Natural killer cell (primary cell): ENCODE measurements at regions of chr9 and their contacts with region 1.

Region 1: DNA sequence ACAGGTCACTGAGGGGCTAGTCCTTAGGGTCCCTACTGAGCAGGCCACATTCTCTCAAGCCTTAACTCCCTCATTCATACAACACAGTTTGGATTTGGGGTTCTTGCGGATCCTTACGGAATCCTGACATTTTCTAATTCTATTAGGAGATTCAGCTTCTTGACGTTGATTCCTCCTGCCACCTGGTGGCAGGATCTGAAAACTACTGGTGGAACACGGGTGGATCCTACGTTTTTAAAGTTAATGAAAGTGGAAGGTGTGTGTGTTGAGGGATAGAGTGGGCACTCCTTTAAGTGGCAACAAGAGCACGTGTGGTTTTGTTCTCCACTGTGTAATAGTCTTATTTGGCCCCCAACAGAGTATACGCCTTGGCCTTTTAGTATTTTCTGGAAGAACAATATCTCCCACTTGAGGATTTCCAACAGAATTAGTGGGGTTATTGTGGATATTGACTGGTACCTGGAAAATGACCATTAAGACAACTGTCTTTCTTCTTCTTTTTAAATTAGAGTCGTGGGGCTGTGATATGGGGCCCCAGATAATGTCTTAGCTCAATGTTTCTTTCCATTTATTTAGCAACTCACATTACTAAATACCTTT is 25.2 kb downstream of the SLC28A3 start:
- DNase-seq: peak; percentile 30 to 75
- ATAC-seq: peak; percentile 57 to 76 (median 75)
- H3K4me3 ChIP-seq: no peak overlapping the region
- H3K4me3 Mint-ChIP-seq: no peak overlapping the region
- H3K27ac ChIP-seq: no peak overlapping the region
- H3K27ac Mint-ChIP-seq: peak overlapping the region in 1 of 2 donors; percentile 49
- H3K4me1 ChIP-seq: peaks cover 14% of the 10 kb centered on the region
- H3K4me1 Mint-ChIP-seq: peaks cover 6 to 27% of the 10 kb centered on the region in 2 donors
- H3K27me3 ChIP-seq: no peaks in the 10 kb centered on the region
- H3K27me3 Mint-ChIP-seq: no peaks in the 10 kb centered on the region
- CTCF ChIP-seq: peak; percentile 87

Region 2: GRCh38 chr9:84238652-84239051 is 76.7 kb before region 1 on chr9:
- intact Hi-C with region 1: loop called (anchors 10 kb)
- DNase-seq: no peak
- ATAC-seq: no peak
- H3K4me3 ChIP-seq: no peak overlapping the region
- H3K4me3 Mint-ChIP-seq: no peak overlapping the region
- H3K27ac ChIP-seq: no peak overlapping the region
- H3K27ac Mint-ChIP-seq: no peak overlapping the region
- H3K4me1 ChIP-seq: no peaks in the 10 kb centered on the region
- H3K4me1 Mint-ChIP-seq: no peaks in the 10 kb centered on the region
- H3K27me3 ChIP-seq: no peaks in the 10 kb centered on the region
- H3K27me3 Mint-ChIP-seq: peaks cover 9 to 22% of the 10 kb centered on the region in 2 donors
- CTCF ChIP-seq: no peak

Region 3: GRCh38 chr9:84261082-84261746 is 54.2 kb before region 1 on chr9:
- intact Hi-C with region 1: loop called (anchors 5 kb)
- DNase-seq: peak; percentile 31 to 70
- ATAC-seq: peak; percentile 63 to 78 (median 68)
- H3K4me3 ChIP-seq: no peak overlapping the region
- H3K4me3 Mint-ChIP-seq: no peak overlapping the region
- H3K27ac ChIP-seq: no peak overlapping the region
- H3K27ac Mint-ChIP-seq: no peak overlapping the region
- H3K4me1 ChIP-seq: peaks cover 3% of the 10 kb centered on the region
- H3K4me1 Mint-ChIP-seq: peaks cover 8 to 9% of the 10 kb centered on the region in 2 donors
- H3K27me3 ChIP-seq: no peaks in the 10 kb centered on the region
- H3K27me3 Mint-ChIP-seq: peaks cover 10 to 24% of the 10 kb centered on the region in 2 donors
- CTCF ChIP-seq: peak; percentile 75

Region 4: DNA sequence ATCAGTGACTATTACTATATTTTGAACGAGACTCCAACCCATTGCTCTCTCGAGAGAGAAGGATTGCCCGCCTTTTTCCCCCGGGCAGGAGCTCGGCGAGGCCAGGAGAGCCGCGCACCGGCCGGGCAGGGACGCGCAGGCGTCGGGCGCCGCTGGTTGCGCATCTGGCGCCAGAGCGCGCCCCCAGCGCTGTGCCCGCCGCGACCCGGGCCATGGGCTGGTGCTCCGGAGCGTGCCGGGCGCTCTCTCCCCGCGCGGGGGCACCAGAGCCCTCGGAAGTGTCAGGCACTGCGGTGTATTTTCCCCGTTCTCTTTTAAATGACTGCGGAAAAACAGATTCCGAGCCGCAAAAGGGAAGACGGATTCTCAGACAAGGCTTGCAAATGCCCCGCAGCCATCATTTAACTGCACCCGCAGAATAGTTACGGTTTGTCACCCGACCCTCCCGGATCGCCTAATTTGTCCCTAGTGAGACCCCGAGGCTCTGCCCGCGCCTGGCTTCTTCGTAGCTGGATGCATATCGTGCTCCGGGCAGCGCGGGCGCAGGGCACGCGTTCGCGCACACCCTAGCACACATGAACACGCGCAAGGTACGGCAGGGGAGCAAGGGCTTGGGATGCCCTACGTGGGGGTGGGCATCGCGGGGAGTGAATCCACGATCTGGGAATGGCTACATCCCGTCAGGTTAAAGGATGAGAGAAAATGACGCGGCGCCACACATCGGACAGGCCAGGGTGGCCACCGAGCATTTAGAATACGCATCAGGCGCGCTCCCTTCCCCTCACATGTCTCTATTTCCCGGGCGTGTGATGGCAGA is 353.0 kb after region 1 on chr9:
- intact Hi-C with region 1: no loop called
- DNase-seq: peak in 1 of 2 donors; percentile 18
- ATAC-seq: peak in 2 of 3 donors; percentile 53
- H3K4me3 ChIP-seq: no peak overlapping the region
- H3K4me3 Mint-ChIP-seq: peak overlapping the region; percentile 14
- H3K27ac ChIP-seq: no peak overlapping the region
- H3K27ac Mint-ChIP-seq: no peak overlapping the region
- H3K4me1 ChIP-seq: peaks cover 27% of the 10 kb centered on the region
- H3K4me1 Mint-ChIP-seq: peaks cover 0 to 15% of the 10 kb centered on the region in 2 donors
- H3K27me3 ChIP-seq: peaks cover 33% of the 10 kb centered on the region
- H3K27me3 Mint-ChIP-seq: peaks cover 54 to 56% of the 10 kb centered on the region in 2 donors
- CTCF ChIP-seq: no peak